ENCODE measurements at regions of chr6 and their contacts with region 1.

Region 1: GRCh38 chr6:73451223-73452107 is 632 bp downstream of the CGAS start:
- DNase-seq: peak; percentile 22 to 53 (median 38)
- ATAC-seq: peak; percentile 61
- H3K4me3 ChIP-seq: peak overlapping the region; percentile 73
- H3K4me3 Mint-ChIP-seq: peak overlapping the region; percentile 87 to 96 (median 90)
- H3K27ac ChIP-seq: peak overlapping the region; percentile 79
- H3K27ac Mint-ChIP-seq: peak overlapping the region; percentile 65 to 93 (median 79)
- H3K4me1 ChIP-seq: peaks cover 4 to 5% of the 10 kb centered on the region in 2 donors
- H3K4me1 Mint-ChIP-seq: peaks cover 17 to 35% (median 27%) of the 10 kb centered on the region in 7 donors
- H3K27me3 ChIP-seq: no peaks in the 10 kb centered on the region
- H3K27me3 Mint-ChIP-seq: no peaks in the 10 kb centered on the region

Region 2: DNA sequence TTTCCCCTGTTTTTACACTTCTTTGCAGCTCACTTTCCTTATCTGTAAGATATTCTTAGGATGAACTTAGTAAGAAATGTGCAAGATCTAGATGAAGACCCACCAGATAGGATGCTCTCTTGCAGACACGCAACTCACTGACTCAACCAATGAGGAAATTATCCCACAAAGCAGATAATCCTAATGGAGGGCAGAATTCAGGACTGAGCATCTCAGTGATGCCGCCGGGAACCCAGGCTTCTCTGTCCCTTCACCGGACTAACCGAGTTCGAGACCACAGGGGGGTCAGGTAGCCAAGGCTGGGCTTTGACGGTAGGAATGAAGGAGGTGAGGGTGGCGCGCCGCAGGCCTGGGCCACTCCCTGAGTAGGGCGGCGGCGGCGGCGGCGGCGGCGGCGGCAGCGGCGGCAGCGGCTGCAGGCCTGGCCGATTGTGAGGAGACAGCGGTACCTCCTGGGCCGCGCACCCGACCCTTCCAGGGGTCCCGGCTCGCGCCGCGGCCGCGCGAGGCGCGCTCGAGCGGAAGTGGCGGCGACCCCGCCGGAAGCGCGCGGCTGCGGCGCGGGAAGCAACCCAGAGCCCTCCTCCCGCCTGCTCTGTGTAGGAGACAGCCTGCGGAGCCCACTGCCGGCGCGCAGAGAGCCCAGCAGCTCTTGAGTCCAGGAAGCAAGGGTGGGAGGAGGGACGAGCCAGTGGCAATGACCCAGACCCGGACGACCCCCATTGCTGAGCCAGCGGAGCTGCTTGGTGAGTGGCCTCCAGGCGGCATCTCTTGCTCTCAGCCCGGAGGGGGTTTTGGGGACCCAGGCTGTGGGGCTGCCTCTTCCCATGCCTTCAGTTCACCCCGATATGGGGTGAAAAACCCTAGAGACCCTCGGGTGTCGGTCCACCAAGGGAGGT is 188.5 kb before region 1 on chr6 and contains the start of gene KHDC1:
- CTCF ChIA-PET with region 1: no interaction called
- POLR2A ChIA-PET with region 1: no interaction called
- intact Hi-C with region 1: loop called in 1 of 2 experiments (anchors 5 kb)
- DNase-seq: peak; percentile 24 to 67 (median 55)
- ATAC-seq: peak; percentile 87
- H3K4me3 ChIP-seq: peak within 1 kb of the TSS; percentile 88
- H3K4me3 Mint-ChIP-seq: peak within 1 kb of the TSS; percentile 76 to 92 (median 86)
- H3K27ac ChIP-seq: peak within 1 kb of the TSS; percentile 69
- H3K27ac Mint-ChIP-seq: peak within 1 kb of the TSS; percentile 64 to 89 (median 81)
- H3K4me1 ChIP-seq: peaks cover 12 to 15% of the 10 kb centered on the region in 2 donors
- H3K4me1 Mint-ChIP-seq: peaks cover 18 to 40% (median 35%) of the 10 kb centered on the region in 7 donors
- H3K27me3 ChIP-seq: no peaks in the 10 kb centered on the region
- H3K27me3 Mint-ChIP-seq: no peaks in the 10 kb centered on the region
- total RNA-seq, gene KHDC1: 0.46 to 3.7 (median 0.66) TPM

Region 3: GRCh38 chr6:73372516-73372915 is 78.9 kb before region 1 on chr6:
- CTCF ChIA-PET with region 1: no interaction called
- POLR2A ChIA-PET with region 1: no interaction called
- intact Hi-C with region 1: no loop called
- DNase-seq: no peak
- ATAC-seq: no peak
- H3K4me3 ChIP-seq: no peak overlapping the region
- H3K4me3 Mint-ChIP-seq: no peak overlapping the region
- H3K27ac ChIP-seq: no peak overlapping the region
- H3K27ac Mint-ChIP-seq: no peak overlapping the region
- H3K4me1 ChIP-seq: no peaks in the 10 kb centered on the region
- H3K4me1 Mint-ChIP-seq: no peaks in the 10 kb centered on the region
- H3K27me3 ChIP-seq: no peaks in the 10 kb centered on the region
- H3K27me3 Mint-ChIP-seq: no peaks in the 10 kb centered on the region

Region 4: DNA sequence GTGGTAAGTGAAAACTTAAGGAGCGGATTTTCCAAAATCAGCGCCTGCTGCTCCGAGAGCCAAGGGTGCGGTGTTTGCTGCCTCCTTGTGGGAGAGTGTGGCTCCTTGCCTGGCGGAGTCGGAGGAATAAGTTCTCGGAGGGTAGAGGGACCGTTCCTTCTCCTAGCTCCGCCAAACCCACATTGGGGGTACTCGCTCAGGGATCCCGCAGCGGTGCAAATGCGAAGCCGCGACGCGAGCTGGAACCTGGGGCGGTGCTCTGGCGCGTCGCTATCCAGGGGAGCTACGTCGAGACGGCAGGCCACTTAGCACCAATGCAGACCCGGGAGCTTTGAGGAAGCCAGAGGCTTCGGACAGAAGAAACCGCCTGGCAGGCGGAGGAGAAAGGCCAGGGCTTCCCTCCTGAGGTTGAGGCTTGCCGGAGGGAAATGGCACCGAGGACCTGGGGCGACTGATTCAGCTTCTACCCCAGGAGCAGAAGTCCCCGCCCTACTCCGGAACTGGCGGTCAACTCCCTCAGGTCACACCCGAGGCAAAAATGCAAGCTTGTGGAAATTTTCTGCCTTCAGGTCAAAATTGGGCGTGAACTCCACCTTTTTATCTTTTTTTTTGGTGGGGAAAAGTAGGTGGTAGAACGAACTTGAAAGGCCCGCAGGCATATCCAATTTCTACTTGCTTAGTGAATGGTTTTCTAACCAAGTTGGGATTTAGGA is 62.5 kb before region 1 on chr6:
- CTCF ChIA-PET with region 1: no interaction called
- POLR2A ChIA-PET with region 1: no interaction called
- intact Hi-C with region 1: loop called (anchors 2 to 5 kb)
- DNase-seq: peak in 7 of 9 donors; percentile 4 to 63 (median 13)
- ATAC-seq: peak; percentile 81
- H3K4me3 ChIP-seq: peak overlapping the region; percentile 73
- H3K4me3 Mint-ChIP-seq: peak overlapping the region; percentile 73 to 87 (median 81)
- H3K27ac ChIP-seq: no peak overlapping the region
- H3K27ac Mint-ChIP-seq: peak overlapping the region in 2 of 9 donors; percentile 14 to 85
- H3K4me1 ChIP-seq: peaks cover 0 to 7% of the 10 kb centered on the region in 2 donors
- H3K4me1 Mint-ChIP-seq: peaks cover 0 to 36% (median 5%) of the 10 kb centered on the region in 7 donors
- H3K27me3 ChIP-seq: no peaks in the 10 kb centered on the region
- H3K27me3 Mint-ChIP-seq: peaks cover 0 to 6% (median 5%) of the 10 kb centered on the region in 5 donors

Region 5: GRCh38 chr6:73585566-73586415 is 134.3 kb after region 1 on chr6:
- CTCF ChIA-PET with region 1: no interaction called
- POLR2A ChIA-PET with region 1: no interaction called
- intact Hi-C with region 1: loop called in 1 of 2 experiments (anchors 2 kb)
- DNase-seq: peak in 7 of 9 donors; percentile 55 to 76 (median 67)
- ATAC-seq: peak; percentile 82
- H3K4me3 ChIP-seq: peak overlapping the region; percentile 51
- H3K4me3 Mint-ChIP-seq: peak overlapping the region; percentile 78 to 90 (median 86)
- H3K27ac ChIP-seq: peak overlapping the region; percentile 89
- H3K27ac Mint-ChIP-seq: peak overlapping the region; percentile 91 to 100 (median 99)
- H3K4me1 ChIP-seq: peaks cover 6 to 16% of the 10 kb centered on the region in 2 donors
- H3K4me1 Mint-ChIP-seq: peaks cover 22 to 27% (median 24%) of the 10 kb centered on the region in 7 donors
- H3K27me3 ChIP-seq: no peaks in the 10 kb centered on the region
- H3K27me3 Mint-ChIP-seq: no peaks in the 10 kb centered on the region

Region 6: GRCh38 chr6:73732845-73733675 is 281.6 kb after region 1 on chr6:
- CTCF ChIA-PET with region 1: no interaction called
- POLR2A ChIA-PET with region 1: no interaction called
- intact Hi-C with region 1: no loop called
- DNase-seq: peak; percentile 34 to 80 (median 69)
- ATAC-seq: peak; percentile 98
- H3K4me3 ChIP-seq: no peak overlapping the region
- H3K4me3 Mint-ChIP-seq: no peak overlapping the region
- H3K27ac ChIP-seq: no peak overlapping the region
- H3K27ac Mint-ChIP-seq: peak overlapping the region in 3 of 9 donors; percentile 48 to 63 (median 58)
- H3K4me1 ChIP-seq: no peaks in the 10 kb centered on the region
- H3K4me1 Mint-ChIP-seq: peaks cover 0 to 21% (median 0%) of the 10 kb centered on the region in 7 donors
- H3K27me3 ChIP-seq: no peaks in the 10 kb centered on the region
- H3K27me3 Mint-ChIP-seq: peaks cover 0 to 4% (median 0%) of the 10 kb centered on the region in 5 donors

Region 7: GRCh38 chr6:75243333-75244062 is 1792.0 kb after region 1 on chr6 and contains the start of gene COX7A2:
- CTCF ChIA-PET with region 1: no interaction called
- POLR2A ChIA-PET with region 1: no interaction called
- intact Hi-C with region 1: loop called in 1 of 2 experiments (anchors 1 kb)
- DNase-seq: peak; percentile 66 to 91 (median 83)
- ATAC-seq: peak; percentile 98
- H3K4me3 ChIP-seq: peak within 1 kb of the TSS; percentile 84
- H3K4me3 Mint-ChIP-seq: peak within 1 kb of the TSS; percentile 88 to 99 (median 98)
- H3K27ac ChIP-seq: peak within 1 kb of the TSS; percentile 90
- H3K27ac Mint-ChIP-seq: peak within 1 kb of the TSS; percentile 94 to 100 (median 98)
- H3K4me1 ChIP-seq: peaks cover 10 to 11% of the 10 kb centered on the region in 2 donors
- H3K4me1 Mint-ChIP-seq: peaks cover 9 to 53% (median 33%) of the 10 kb centered on the region in 7 donors
- H3K27me3 ChIP-seq: no peaks in the 10 kb centered on the region
- H3K27me3 Mint-ChIP-seq: peaks cover 0 to 17% (median 15%) of the 10 kb centered on the region in 5 donors
- total RNA-seq, gene COX7A2: 159 to 395 (median 183) TPM